Prostate gland (tissue), 2 donors: ENCODE measurements at regions of chr6 and their contacts with region 1.

Region 1: GRCh38 chr6:121482004-121482693 is 46.7 kb downstream of the GJA1 start:
- DNase-seq: no peak
- H3K4me3 ChIP-seq: no peak overlapping the region
- H3K27ac ChIP-seq: no peak overlapping the region
- H3K4me1 ChIP-seq: no peaks in the 10 kb centered on the region
- H3K27me3 ChIP-seq: no peaks in the 10 kb centered on the region
- CTCF ChIP-seq: no peak
- POLR2A ChIP-seq: no peak

Region 2: GRCh38 chr6:121724576-121724975 is 242.4 kb after region 1 on chr6:
- intact Hi-C with region 1: no loop called
- DNase-seq: no peak
- H3K4me3 ChIP-seq: no peak overlapping the region
- H3K27ac ChIP-seq: no peak overlapping the region
- H3K4me1 ChIP-seq: no peaks in the 10 kb centered on the region
- H3K27me3 ChIP-seq: no peaks in the 10 kb centered on the region
- CTCF ChIP-seq: no peak
- POLR2A ChIP-seq: no peak

Region 3: GRCh38 chr6:121800047-121800446 is 317.9 kb after region 1 on chr6:
- intact Hi-C with region 1: no loop called
- DNase-seq: no peak
- H3K4me3 ChIP-seq: no peak overlapping the region
- H3K27ac ChIP-seq: no peak overlapping the region
- H3K4me1 ChIP-seq: no peaks in the 10 kb centered on the region
- H3K27me3 ChIP-seq: no peaks in the 10 kb centered on the region
- CTCF ChIP-seq: no peak
- POLR2A ChIP-seq: no peak

Region 4: DNA sequence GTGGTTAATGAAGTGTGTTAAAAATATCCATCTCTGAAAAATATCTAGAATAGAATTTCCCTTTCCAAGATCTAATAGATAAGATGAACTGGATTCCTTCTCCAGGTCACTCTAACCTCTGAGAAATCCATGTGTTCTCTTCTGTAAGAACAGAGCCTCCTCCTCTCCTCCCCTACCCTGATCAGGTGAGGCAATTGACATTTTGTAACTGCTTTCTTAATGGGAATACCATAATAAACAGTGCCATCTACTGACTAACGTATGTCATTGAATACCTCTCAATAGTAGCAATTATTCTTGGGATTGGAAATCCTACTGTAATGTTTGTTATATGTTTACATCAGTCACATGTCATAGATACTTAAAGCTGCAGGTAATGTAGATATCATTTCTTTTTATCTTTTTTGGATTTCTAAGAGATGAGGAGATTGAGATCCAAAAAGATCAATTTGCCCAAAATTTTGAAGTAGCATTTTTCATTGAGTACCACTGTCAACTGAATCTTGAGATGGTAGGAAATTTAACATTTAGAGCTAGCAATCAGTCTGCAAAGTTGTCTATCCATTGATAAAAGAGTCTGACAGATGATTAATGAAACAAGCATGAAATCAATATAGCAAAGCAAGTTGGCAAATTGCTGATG is 551.5 kb after region 1 on chr6:
- intact Hi-C with region 1: loop called (anchors 10 kb)
- DNase-seq: peak; percentile 14
- H3K4me3 ChIP-seq: no peak overlapping the region
- H3K27ac ChIP-seq: no peak overlapping the region
- H3K4me1 ChIP-seq: no peaks in the 10 kb centered on the region
- H3K27me3 ChIP-seq: no peaks in the 10 kb centered on the region
- CTCF ChIP-seq: peak in 3 of 4 experiments; percentile 70 to 77 (median 76)
- POLR2A ChIP-seq: no peak